MCF 10A (cell line): ENCODE measurements at regions of chr2 and their contacts with region 1.

Region 1: DNA sequence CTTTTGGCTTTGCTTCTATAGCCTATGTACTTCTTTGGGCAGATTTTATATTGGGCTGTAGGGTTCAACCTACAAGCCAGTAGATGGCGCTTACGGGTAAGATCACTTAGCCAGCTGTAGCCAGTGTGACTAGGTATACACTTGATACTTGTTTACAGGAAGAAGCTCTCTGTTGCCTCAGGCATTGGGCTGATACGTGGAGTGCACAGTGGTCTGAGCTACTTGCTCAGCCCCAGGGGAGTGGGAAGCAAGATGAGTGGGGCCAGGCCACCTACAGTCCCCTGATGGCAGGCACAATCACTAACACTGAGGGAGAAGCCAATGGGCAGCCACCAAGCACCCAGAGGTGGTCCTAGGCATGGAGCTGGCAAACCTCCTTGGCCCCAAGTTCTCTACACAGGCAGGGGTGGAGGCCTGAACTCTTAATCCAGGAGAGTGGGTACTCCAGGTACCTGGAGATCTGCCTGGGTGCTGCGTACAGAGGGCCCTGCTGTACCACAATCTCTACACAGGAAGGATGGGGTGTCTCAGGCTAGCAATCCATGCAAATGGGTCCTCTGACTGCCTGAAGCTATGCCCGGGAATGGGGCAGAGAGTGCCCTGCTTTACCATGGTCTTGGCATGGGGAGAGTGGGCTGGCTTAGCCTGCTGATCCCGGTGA is 122.2 kb downstream of the NCOA1 start:
- DNase-seq: peak; percentile 66
- H3K4me3 Mint-ChIP-seq: no peak overlapping the region
- H3K27ac Mint-ChIP-seq: no peak overlapping the region
- H3K4me1 Mint-ChIP-seq: peaks cover 8% of the 10 kb centered on the region
- H3K27me3 Mint-ChIP-seq: no peaks in the 10 kb centered on the region
- CTCF ChIP-seq: no peak

Region 2: DNA sequence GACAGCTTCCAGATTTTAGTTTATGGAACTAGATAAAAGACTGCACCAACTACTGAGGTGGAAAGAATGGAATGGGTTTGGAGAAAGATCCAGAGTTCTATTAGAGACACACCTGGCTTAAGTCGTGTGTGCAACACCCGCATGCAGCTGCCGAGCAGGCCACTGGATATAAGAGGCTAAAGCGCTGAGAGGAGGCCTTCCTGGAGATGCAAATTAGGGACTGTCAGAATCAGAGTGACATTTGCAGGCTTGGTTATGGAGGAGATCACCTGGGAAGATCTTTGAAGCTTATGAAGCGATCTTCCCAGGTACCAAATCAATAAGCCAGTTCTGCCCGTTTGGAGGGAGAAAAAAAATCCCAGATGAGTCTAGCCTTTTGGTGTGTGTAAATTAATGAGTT is 1258.7 kb before region 1 on chr2:
- CTCF ChIA-PET with region 1: no interaction called
- POLR2A ChIA-PET with region 1: no interaction called
- intact Hi-C with region 1: no loop called
- DNase-seq: no peak
- H3K4me3 Mint-ChIP-seq: no peak overlapping the region
- H3K27ac Mint-ChIP-seq: no peak overlapping the region
- H3K4me1 Mint-ChIP-seq: peaks cover 5% of the 10 kb centered on the region
- H3K27me3 Mint-ChIP-seq: peaks cover 11% of the 10 kb centered on the region
- CTCF ChIP-seq: no peak

Region 3: GRCh38 chr2:24409700-24410556 is 203.4 kb before region 1 on chr2:
- CTCF ChIA-PET with region 1: no interaction called
- POLR2A ChIA-PET with region 1: no interaction called
- intact Hi-C with region 1: no loop called
- DNase-seq: peak; percentile 77
- H3K4me3 Mint-ChIP-seq: no peak overlapping the region
- H3K27ac Mint-ChIP-seq: no peak overlapping the region
- H3K4me1 Mint-ChIP-seq: no peaks in the 10 kb centered on the region
- H3K27me3 Mint-ChIP-seq: no peaks in the 10 kb centered on the region
- CTCF ChIP-seq: peak; percentile 67

Region 4: GRCh38 chr2:24597181-24597870 is 16.0 kb before region 1 on chr2:
- CTCF ChIA-PET with region 1: interaction called, 4 read pairs
- POLR2A ChIA-PET with region 1: no interaction called
- intact Hi-C with region 1: loop called (anchors 2 kb)
- DNase-seq: no peak
- H3K4me3 Mint-ChIP-seq: no peak overlapping the region
- H3K27ac Mint-ChIP-seq: no peak overlapping the region
- H3K4me1 Mint-ChIP-seq: no peaks in the 10 kb centered on the region
- H3K27me3 Mint-ChIP-seq: no peaks in the 10 kb centered on the region
- CTCF ChIP-seq: no peak

Region 5: GRCh38 chr2:24623535-24623934 is 10.3 kb after region 1 on chr2:
- CTCF ChIA-PET with region 1: no interaction called
- POLR2A ChIA-PET with region 1: no interaction called
- intact Hi-C with region 1: no loop called
- DNase-seq: no peak
- H3K4me3 Mint-ChIP-seq: no peak overlapping the region
- H3K27ac Mint-ChIP-seq: no peak overlapping the region
- H3K4me1 Mint-ChIP-seq: peaks cover 5% of the 10 kb centered on the region
- H3K27me3 Mint-ChIP-seq: no peaks in the 10 kb centered on the region
- CTCF ChIP-seq: no peak